ENCODE measurements at regions of chr1 and their contacts with region 1.

Region 1: DNA sequence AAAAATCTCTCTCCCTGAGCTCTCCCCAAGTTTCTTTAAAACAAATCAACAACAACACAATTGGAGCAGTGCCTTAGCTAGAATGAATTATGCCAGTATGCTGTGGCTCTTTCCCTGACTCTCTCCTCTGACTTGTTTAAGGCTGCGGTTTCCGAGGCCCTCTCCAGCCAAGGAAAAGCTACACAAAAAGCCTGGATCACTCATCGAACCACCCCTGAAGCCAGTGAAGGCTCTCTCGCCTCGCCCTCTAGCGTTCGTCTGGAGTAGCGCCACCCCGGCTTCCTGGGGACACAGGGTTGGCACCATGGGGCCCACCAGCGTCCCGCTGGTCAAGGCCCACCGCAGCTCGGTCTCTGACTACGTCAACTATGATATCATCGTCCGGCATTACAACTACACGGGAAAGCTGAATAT is 1.9 kb downstream of the S1PR1 start:
- DNase-seq: peak; percentile 94
- H3K4me3 ChIP-seq: peak overlapping the region; percentile 81 to 100 (median 88)
- H3K27ac ChIP-seq: peak overlapping the region; percentile 99
- H3K4me1 ChIP-seq: peaks cover 55% of the 10 kb centered on the region
- H3K27me3 ChIP-seq: no peaks in the 10 kb centered on the region
- CTCF ChIP-seq: peak; percentile 97 to 98
- POLR2A ChIP-seq: peak; percentile 46

Region 2: DNA sequence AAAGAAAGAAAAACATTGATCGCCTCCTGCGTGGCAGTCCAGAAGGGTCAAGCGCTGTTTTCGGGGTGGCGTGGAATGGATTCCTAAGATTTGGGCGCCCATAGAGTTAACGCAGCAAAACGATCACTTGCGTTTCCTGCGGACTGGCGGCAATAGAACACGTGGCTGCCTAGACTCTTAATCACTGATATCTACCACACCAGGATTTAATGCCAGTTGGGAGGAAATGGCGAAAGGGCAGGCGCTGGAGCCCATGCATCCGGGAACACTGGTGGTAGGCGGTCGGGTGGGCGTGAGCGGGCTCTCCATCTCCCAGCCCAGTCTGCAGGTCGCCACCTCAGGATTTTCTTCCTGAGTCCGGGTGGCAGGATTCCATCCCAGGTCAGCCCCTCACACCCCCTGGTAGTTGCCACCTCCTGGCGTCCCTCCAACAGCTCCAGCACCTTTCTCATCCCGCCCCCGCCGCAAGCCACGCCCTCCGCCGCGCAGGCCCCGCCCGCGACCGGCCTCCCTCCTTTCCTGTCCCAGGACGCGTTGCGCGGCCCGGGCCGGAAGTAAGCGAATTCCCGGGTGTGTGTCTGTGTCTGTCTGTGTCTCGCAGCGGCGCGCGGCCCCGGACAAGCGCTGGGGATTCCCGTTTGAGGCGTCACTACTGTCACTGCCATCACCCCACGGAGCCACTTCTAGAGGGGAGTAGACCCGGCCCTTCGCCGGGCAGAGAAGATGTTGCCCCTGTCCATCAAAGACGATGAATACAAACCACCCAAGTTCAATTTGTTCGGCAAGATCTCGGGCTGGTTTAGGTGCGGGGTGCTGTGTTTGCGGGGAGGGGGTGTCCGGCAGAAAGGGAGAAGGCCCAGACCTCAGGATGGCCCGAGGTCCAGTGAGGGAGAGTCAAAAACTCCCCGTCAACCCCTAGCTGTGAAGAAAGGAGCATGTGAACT is 342.9 kb before region 1 on chr1 and contains the start of gene SLC30A7:
- CTCF ChIA-PET with region 1: interaction called, 6 read pairs
- POLR2A ChIA-PET with region 1: interaction called, 3 read pairs
- dilution Hi-C with region 1: no loop called
- intact Hi-C with region 1: loop called (anchors 1 kb)
- DNase-seq: peak; percentile 90
- H3K4me3 ChIP-seq: peak within 1 kb of the TSS; percentile 87 to 91 (median 91)
- H3K27ac ChIP-seq: peak within 1 kb of the TSS; percentile 93
- H3K4me1 ChIP-seq: peaks cover 26% of the 10 kb centered on the region
- H3K27me3 ChIP-seq: no peaks in the 10 kb centered on the region
- CTCF ChIP-seq: no peak
- POLR2A ChIP-seq: peak; percentile 87
- total RNA-seq, gene SLC30A7: 38.6 and 39.0 TPM in 2 replicates

Region 3: GRCh38 chr1:101025657-101026504 is 212.8 kb before region 1 on chr1 and contains the start of gene DPH5:
- CTCF ChIA-PET with region 1: interaction called, 5 read pairs
- POLR2A ChIA-PET with region 1: no interaction called
- dilution Hi-C with region 1: no loop called
- intact Hi-C with region 1: loop called (anchors 1 kb)
- DNase-seq: peak; percentile 93
- H3K4me3 ChIP-seq: peak within 1 kb of the TSS; percentile 70 to 96 (median 76)
- H3K27ac ChIP-seq: peak within 1 kb of the TSS; percentile 75
- H3K4me1 ChIP-seq: peaks cover 22% of the 10 kb centered on the region
- H3K27me3 ChIP-seq: no peaks in the 10 kb centered on the region
- CTCF ChIP-seq: no peak
- POLR2A ChIP-seq: peak; percentile 93
- total RNA-seq, gene DPH5: 31.3 and 37.2 TPM in 2 replicates

Region 4: GRCh38 chr1:101161619-101162018 is 77.1 kb before region 1 on chr1:
- CTCF ChIA-PET with region 1: interaction called, 16 read pairs
- POLR2A ChIA-PET with region 1: interaction called, 8 read pairs
- dilution Hi-C with region 1: no loop called
- intact Hi-C with region 1: loop called (anchors 1 kb)
- DNase-seq: peak; percentile 95
- H3K4me3 ChIP-seq: peak overlapping the region in 1 of 3 experiments; percentile 33
- H3K27ac ChIP-seq: peak overlapping the region; percentile 98
- H3K4me1 ChIP-seq: peaks cover 34% of the 10 kb centered on the region
- H3K27me3 ChIP-seq: no peaks in the 10 kb centered on the region
- CTCF ChIP-seq: no peak
- POLR2A ChIP-seq: no peak

Region 5: GRCh38 chr1:101207891-101208290 is 30.8 kb before region 1 on chr1:
- CTCF ChIA-PET with region 1: no interaction called
- POLR2A ChIA-PET with region 1: no interaction called
- dilution Hi-C with region 1: no loop called
- intact Hi-C with region 1: no loop called
- DNase-seq: no peak
- H3K4me3 ChIP-seq: no peak overlapping the region
- H3K27ac ChIP-seq: no peak overlapping the region
- H3K4me1 ChIP-seq: no peaks in the 10 kb centered on the region
- H3K27me3 ChIP-seq: no peaks in the 10 kb centered on the region
- CTCF ChIP-seq: no peak
- POLR2A ChIP-seq: no peak

Region 6: GRCh38 chr1:101253976-101254674 is 15.4 kb after region 1 on chr1:
- CTCF ChIA-PET with region 1: interaction called, 31 read pairs
- POLR2A ChIA-PET with region 1: interaction called, 8 read pairs
- dilution Hi-C with region 1: no loop called
- intact Hi-C with region 1: loop called (anchors 1 kb)
- DNase-seq: no peak
- H3K4me3 ChIP-seq: no peak overlapping the region
- H3K27ac ChIP-seq: no peak overlapping the region
- H3K4me1 ChIP-seq: peaks cover 22% of the 10 kb centered on the region
- H3K27me3 ChIP-seq: no peaks in the 10 kb centered on the region
- CTCF ChIP-seq: no peak
- POLR2A ChIP-seq: no peak

Region 7: GRCh38 chr1:101309334-101310311 is 70.9 kb after region 1 on chr1:
- CTCF ChIA-PET with region 1: interaction called, 15 read pairs
- POLR2A ChIA-PET with region 1: interaction called, 5 read pairs
- dilution Hi-C with region 1: no loop called
- intact Hi-C with region 1: no loop called
- DNase-seq: peak; percentile 79
- H3K4me3 ChIP-seq: peak overlapping the region in 2 of 3 experiments; percentile 27 to 63
- H3K27ac ChIP-seq: no peak overlapping the region
- H3K4me1 ChIP-seq: peaks cover 6% of the 10 kb centered on the region
- H3K27me3 ChIP-seq: peaks cover 0 to 1% of the 10 kb centered on the region in 2 experiments
- CTCF ChIP-seq: peak; percentile 87 to 90
- POLR2A ChIP-seq: no peak

Region 8: DNA sequence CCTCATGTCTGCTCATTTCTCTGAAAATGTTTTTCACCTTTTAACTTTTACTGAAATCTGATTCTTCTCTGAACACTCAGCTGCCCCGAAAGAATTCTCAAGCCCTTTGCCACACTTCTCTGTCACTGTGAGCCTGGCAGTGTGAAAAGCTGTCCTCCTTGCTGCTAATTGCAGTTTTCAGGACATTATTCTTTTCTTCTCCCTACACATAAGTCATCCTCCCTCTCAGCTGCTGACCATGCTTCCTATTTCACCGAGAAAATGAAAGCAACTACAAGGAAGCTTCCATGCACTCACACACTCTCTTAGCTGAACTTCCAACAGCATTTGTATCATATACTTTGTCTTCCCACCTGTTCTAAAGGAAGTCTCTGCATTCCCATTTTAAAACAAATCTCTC is 742.3 kb after region 1 on chr1:
- CTCF ChIA-PET with region 1: no interaction called
- POLR2A ChIA-PET with region 1: no interaction called
- dilution Hi-C with region 1: no loop called
- intact Hi-C with region 1: no loop called
- DNase-seq: no peak
- H3K4me3 ChIP-seq: no peak overlapping the region
- H3K27ac ChIP-seq: no peak overlapping the region
- H3K4me1 ChIP-seq: no peaks in the 10 kb centered on the region
- H3K27me3 ChIP-seq: no peaks in the 10 kb centered on the region
- CTCF ChIP-seq: no peak
- POLR2A ChIP-seq: no peak

Measured in endothelial cell of umbilical vein (primary cell).